ENCODE measurements at regions of chr2 and their contacts with region 1.

Region 1: GRCh38 chr2:108533832-108534583 is at the start of gene LIMS1:
- DNase-seq: peak; percentile 85
- H3K4me3 ChIP-seq: peak within 1 kb of the TSS; percentile 67 to 98 (median 94)
- H3K27ac ChIP-seq: peak within 1 kb of the TSS; percentile 97
- H3K4me1 ChIP-seq: peaks cover 33% of the 10 kb centered on the region
- H3K27me3 ChIP-seq: no peaks in the 10 kb centered on the region
- CTCF ChIP-seq: no peak
- total RNA-seq, gene LIMS1: 60.1 to 108 TPM

Region 2: GRCh38 chr2:108492364-108492763 is 41.6 kb before region 1 on chr2:
- CTCF ChIA-PET with region 1: no interaction called
- dilution Hi-C with region 1: no loop called
- in situ Hi-C with region 1: no loop called
- intact Hi-C with region 1: loop called (anchors 1 kb)
- DNase-seq: peak; percentile 88
- H3K4me3 ChIP-seq: no peak overlapping the region
- H3K27ac ChIP-seq: no peak overlapping the region
- H3K4me1 ChIP-seq: peaks cover 8% of the 10 kb centered on the region
- H3K27me3 ChIP-seq: no peaks in the 10 kb centered on the region
- CTCF ChIP-seq: no peak

Region 3: DNA sequence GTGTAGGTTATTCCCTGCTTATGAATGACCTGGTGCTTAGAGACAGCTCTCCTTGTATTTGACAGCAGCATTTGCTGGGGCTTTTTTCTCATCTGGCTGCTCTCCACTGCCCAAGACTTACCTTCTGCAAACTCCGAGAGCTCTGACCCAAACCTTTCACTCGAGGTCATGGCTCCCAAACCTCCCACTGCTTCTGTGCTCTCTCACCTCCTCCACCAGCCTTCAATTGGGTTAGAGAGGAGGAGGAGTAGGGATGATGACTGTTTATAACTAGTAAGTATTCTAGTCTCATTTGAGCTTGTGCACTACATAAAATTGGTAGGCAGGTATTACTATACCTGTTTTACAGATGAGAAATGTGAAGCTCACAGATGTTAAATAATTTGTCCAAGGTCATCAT is 40.3 kb after region 1 on chr2:
- CTCF ChIA-PET with region 1: no interaction called
- dilution Hi-C with region 1: no loop called
- in situ Hi-C with region 1: no loop called
- intact Hi-C with region 1: no loop called
- DNase-seq: no peak
- H3K4me3 ChIP-seq: no peak overlapping the region
- H3K27ac ChIP-seq: no peak overlapping the region
- H3K4me1 ChIP-seq: peaks cover 20% of the 10 kb centered on the region
- H3K27me3 ChIP-seq: no peaks in the 10 kb centered on the region
- CTCF ChIP-seq: no peak

Region 4: DNA sequence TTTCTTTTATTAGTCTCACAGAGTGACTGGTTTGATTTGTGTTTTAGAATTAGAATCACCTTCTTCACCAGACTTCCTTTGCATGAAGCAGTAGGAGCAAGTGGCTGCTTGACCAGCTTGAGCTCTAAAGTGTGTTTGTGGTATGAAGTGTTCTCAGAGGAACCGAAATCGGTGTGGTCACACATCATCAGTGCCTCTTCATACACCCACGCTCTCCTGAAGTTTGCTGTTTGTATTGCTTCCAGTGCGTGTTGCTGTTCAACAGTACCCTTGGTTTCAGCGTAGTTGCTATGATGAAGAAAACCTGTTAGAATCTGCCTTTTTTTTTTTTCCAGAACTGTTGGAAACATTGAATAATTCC is 78.1 kb after region 1 on chr2:
- CTCF ChIA-PET with region 1: no interaction called
- dilution Hi-C with region 1: no loop called
- in situ Hi-C with region 1: no loop called
- intact Hi-C with region 1: no loop called
- DNase-seq: peak; percentile 95
- H3K4me3 ChIP-seq: no peak overlapping the region
- H3K27ac ChIP-seq: peak overlapping the region; percentile 96
- H3K4me1 ChIP-seq: peaks cover 50% of the 10 kb centered on the region
- H3K27me3 ChIP-seq: no peaks in the 10 kb centered on the region
- CTCF ChIP-seq: no peak